Head of caudate nucleus (tissue), 42 donors: ENCODE measurements at regions of chr9 and their contacts with region 1.

Region 1: GRCh38 chr9:6054280-6055099 is 39.1 kb upstream of the RANBP6 start:
- DNase-seq: peak in 41 of 42 donors; percentile 12 to 88 (median 67)

Region 2: GRCh38 chr9:5876026-5876425 is 178.5 kb before region 1 on chr9:
- intact Hi-C with region 1: no loop called
- DNase-seq: no peak

Region 3: GRCh38 chr9:5886114-5886939 is 168.2 kb before region 1 on chr9:
- intact Hi-C with region 1: loop called (anchors 5 kb)
- DNase-seq: peak; percentile 73 to 93 (median 83)

Region 4: GRCh38 chr9:5971740-5972139 is 82.8 kb before region 1 on chr9:
- intact Hi-C with region 1: no loop called
- DNase-seq: no peak

Region 5: DNA sequence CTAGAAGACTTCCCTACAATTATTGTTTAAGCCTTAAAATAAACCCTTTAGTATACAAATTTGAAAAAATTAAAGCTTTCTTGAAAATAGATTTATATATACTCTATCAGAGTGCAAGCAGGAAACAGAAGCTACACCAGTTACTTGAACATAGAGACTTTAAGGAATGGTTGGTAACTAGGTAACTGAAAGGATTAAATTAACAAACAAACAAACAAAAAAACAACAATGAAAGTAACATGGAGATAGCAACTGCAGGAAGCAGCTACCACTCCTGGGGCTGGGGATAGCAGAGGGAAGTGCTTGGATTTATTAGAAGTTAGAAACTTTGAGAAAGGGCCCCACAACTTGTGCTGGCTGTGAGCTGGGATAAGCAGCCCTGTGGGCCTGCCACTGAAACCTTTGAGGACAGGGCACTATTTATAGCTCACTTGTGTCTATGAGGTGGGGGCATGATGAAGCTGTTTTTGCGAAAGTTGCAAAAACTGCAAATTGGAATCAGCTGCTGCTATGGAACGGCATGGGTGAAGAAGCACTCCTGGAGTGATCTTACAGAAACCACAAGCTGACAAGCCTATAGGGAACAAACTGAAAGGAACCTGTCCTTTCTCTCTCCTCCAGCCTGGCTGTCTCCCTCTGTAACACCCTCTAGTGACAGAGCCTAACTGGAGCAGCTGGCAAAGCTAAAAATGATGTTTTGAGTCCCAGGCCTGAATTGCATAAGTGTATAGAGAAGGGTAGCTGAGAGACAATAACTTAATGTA is 52.3 kb after region 1 on chr9:
- intact Hi-C with region 1: no loop called
- DNase-seq: peak in 23 of 42 donors; percentile 2 to 66 (median 24)

Region 6: DNA sequence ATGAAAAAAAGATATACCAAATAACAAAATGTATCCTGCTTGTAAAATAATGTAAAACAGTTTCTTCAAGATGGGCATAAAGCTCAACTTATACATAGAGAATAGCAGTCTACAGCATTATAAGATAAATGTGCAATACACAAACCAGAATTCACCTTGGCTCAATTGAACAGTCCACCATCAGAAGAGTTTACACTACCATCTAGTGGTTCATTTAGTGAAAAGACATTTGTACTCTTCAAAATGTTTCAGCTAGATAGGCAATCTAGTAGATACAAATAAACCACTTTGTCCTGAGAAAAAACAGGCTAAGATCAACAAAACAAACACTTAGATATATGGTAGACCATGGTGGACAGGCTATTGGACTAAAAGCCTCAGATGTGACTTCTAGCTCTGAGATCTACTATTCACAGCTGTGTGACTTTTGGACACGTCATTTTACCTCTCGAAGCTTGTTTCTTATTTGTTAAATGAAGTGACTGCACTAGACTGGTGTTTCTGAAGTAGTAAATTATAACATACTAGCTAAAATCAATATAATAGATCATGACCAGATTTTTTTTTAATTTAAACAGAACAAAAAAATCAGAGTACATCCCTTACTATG is 251.6 kb after region 1 on chr9:
- intact Hi-C with region 1: loop called (anchors 5 kb)
- DNase-seq: peak in 2 of 42 donors; percentile 5 to 13